ENCODE measurements at regions of chr1 and their contacts with region 1.

Region 1: DNA sequence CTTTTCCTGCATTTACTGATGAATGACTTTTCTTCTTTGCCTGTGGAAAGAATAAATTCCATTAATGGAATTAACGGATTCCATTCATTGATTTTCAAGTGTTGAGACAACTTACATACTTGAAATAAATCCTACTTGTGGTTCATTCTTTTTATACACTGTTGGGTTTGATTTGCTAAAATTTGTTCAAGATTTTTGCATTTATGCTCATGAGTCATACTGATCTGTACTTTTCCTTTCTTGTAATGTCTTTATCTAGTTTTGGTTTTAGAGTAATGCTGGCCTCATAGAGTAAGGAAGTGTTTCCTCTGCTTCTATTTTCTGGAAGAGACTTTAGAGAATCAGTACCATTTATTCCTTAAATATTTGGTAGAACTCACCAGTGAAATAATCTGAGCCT is 14.4 kb downstream of the UROD start:
- DNase-seq: peak; percentile 25
- H3K4me3 ChIP-seq: no peak overlapping the region
- H3K27ac ChIP-seq: no peak overlapping the region
- H3K4me1 ChIP-seq: peaks cover 6% of the 10 kb centered on the region; the same call in 1 of the 2 replicates
- H3K27me3 ChIP-seq: no peaks in the 10 kb centered on the region

Region 2: DNA sequence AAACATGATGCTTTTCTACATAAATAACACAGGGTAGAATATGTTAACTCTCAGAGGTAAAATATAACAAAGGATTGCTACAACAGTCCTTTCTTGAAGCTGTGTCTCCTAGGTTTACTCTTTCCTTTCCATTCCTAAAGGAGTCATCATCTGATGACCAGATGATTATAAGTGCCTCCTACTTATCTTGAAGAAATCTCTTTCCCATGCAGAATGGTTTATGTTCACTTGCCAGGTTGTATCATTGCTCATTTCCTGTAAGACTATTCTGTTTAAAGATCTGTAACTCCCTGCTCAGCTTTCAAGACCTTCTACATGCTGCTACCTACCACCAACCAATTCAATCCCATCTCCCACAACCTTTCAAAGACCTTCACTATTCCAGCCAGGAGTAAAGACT is 131.9 kb before region 1 on chr1:
- in situ Hi-C with region 1: no loop called
- DNase-seq: peak; percentile 86
- H3K4me3 ChIP-seq: 0 out of 2 replicates have a peak overlapping the region, but pooled peaks have one; percentile 33
- H3K27ac ChIP-seq: peak overlapping the region; percentile 62
- H3K4me1 ChIP-seq: peaks cover 19% of the 10 kb centered on the region
- H3K27me3 ChIP-seq: no peaks in the 10 kb centered on the region

Region 3: DNA sequence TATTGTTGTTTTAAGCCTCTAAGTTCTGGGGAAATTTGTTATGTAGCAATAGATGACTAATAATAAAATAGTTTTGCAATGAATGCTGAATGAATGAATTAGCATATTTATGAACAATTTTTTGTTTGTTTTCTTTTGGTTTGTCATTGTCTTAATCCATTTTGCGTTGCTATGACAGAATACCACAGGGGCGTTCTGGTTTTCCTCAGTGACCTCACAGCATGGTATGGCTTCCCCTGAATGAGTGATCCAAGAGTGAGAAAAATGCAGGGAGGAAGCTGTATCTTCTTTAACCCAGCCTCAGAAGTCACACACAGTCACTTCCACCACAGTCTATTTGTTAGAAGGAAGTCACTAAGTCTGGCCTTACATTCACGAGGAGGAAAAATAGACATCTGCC is 246.5 kb after region 1 on chr1:
- in situ Hi-C with region 1: loop called (anchors 10 kb)
- DNase-seq: peak; percentile 80
- H3K4me3 ChIP-seq: no peak overlapping the region
- H3K27ac ChIP-seq: peak overlapping the region; percentile 70
- H3K4me1 ChIP-seq: peaks cover 6% of the 10 kb centered on the region
- H3K27me3 ChIP-seq: no peaks in the 10 kb centered on the region

Region 4: GRCh38 chr1:45470306-45470798 is 443.9 kb after region 1 on chr1:
- in situ Hi-C with region 1: loop called (anchors 10 kb)
- DNase-seq: no peak
- H3K4me3 ChIP-seq: no peak overlapping the region
- H3K27ac ChIP-seq: no peak overlapping the region
- H3K4me1 ChIP-seq: no peaks in the 10 kb centered on the region
- H3K27me3 ChIP-seq: no peaks in the 10 kb centered on the region